ENCODE measurements at regions of chr6 and their contacts with region 1.

Region 1: DNA sequence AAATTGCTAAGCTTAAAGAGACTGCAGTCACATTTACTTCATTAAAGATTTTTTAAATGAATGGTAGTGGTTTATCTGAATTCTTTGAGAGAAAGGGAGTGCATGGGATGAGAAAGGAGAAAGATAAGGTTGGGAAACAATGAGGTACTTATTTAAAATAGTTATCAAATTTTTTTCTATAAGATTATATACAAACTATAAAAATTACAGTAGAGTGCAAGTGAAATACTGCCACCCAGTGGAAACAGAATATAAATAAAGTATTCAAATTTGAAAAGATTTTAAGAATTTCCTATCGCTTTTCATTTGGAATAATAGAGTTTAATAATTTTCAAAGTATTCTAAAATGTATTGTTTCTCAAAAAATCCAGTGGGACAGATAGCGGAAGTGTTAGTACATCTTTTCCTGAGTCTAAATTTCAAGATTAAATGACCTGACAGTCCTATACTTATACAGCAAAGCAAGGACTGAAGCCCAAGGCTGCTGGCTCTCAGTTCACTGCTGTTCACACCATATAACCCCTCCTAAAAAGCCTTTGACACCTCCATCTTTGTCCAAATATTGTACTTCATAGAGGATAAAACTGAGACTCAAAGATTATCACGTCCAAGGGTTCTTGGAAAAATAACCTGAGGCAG is 31.1 kb downstream of the EPM2A start:
- DNase-seq: no peak
- H3K4me3 ChIP-seq: no peak overlapping the region
- H3K27ac ChIP-seq: no peak overlapping the region
- H3K27me3 ChIP-seq: no peaks in the 10 kb centered on the region
- CTCF ChIP-seq: peak; percentile 55

Region 2: DNA sequence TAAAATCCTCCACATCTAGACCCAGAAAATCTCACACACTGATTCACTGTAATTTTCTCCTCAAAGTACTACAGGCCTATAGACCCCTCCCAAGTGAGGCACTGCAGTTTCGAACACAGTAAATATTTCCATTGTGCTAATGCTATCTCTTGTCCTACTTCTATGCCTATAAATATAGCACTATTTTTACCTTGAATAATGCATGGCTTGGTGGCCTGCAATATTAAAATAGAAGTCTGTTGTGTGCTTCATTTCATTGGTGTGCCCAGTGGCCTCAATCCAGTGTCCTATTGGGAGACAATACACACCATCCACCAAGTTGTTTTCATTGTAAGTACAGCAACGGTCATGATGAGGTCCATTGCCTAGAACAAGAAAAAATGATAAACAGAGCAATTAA is 18.3 kb before region 1 on chr6:
- CTCF ChIA-PET with region 1: interaction called, 12 read pairs
- POLR2A ChIA-PET with region 1: no interaction called
- DNase-seq: no peak
- H3K4me3 ChIP-seq: no peak overlapping the region
- H3K27ac ChIP-seq: no peak overlapping the region
- H3K27me3 ChIP-seq: no peaks in the 10 kb centered on the region
- CTCF ChIP-seq: no peak

Region 3: DNA sequence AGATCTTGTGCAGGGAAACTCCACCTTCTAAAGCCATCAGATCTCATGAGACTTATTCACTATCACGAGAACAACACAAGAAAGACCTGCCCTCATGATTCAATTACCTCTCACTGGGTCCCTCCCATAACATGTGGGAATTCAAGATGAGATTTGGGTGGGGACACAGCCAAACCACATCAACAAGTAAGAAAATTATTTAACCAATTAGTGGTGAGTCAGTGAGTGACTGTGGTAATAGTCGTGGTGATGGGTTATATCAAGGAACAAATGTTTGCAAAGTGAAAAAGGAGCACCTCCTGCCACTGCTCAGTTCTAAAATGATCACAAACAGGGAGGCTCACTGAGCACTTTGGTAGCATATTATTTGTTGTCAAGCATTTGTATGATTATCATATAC is 10.5 kb after region 1 on chr6:
- CTCF ChIA-PET with region 1: interaction called, 10 read pairs
- POLR2A ChIA-PET with region 1: no interaction called
- DNase-seq: no peak
- H3K4me3 ChIP-seq: no peak overlapping the region
- H3K27ac ChIP-seq: no peak overlapping the region
- H3K27me3 ChIP-seq: no peaks in the 10 kb centered on the region
- CTCF ChIP-seq: no peak

Region 4: DNA sequence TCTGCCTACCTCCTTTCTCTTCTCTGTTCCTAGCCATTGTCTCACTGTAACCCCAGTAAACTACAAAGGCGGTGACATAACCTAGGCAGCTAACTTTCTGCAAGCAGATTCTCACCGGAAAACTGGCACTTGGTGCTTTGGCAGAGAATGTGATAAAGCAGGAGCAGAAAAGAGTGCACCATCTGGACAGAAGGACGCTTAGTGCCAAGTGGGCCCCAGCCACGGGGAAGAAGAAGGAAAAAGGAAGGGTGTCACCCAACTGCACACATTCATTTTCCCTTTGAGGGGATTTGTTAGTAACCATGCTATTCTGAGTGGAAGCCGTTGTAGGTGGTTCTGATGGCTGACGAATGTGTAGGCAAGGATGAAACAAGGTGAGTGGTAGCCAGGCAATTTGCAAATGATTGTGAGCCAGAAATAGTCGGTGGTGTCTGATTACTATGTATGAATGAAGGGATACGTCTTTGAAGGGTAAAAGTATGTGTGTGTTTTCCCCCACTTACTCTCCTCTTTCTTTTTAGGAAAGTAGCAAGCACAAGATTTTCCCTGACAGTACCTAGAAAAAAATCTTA is 1351.6 kb after region 1 on chr6:
- CTCF ChIA-PET with region 1: no interaction called
- POLR2A ChIA-PET with region 1: no interaction called
- DNase-seq: no peak
- H3K4me3 ChIP-seq: no peak overlapping the region
- H3K27ac ChIP-seq: no peak overlapping the region
- H3K27me3 ChIP-seq: no peaks in the 10 kb centered on the region
- CTCF ChIP-seq: no peak